ENCODE measurements at regions of chr7 and their contacts with region 1.

Region 1: DNA sequence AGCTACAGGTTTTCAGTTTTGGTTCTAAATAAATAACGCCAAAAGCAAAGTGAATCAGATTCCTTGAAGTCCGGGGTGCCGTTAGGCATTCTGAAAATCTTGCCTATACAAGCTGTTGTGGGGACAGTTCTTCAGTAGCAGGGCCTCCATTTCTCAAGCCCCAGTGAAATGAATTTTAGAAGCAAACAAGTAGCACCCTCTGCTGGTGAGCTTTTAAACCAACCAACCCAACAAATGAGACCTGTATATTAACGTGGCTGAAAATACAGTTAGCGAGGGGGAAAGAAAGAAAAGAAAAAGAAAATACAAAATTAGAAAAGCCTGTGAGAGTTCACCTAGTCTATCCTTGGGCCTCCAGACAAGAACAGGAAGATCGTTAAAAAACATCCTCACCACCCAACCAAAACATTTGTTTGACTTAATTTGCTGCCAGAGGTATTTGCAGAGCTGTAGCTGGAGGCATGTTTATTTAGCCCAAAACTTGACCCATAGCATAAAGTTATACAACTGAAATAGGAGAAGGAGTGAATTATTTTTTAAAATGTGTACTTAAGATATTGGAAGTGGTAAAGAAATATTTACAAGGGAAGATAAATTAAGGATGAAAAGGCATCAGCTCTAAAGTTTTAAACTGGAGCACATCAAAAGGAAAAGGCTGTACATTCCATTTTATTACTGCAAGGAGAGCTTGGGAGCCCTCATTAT is 98.9 kb downstream of the DYNC1I1 start:
- DNase-seq: peak in 1 of 2 experiments; percentile 52
- H3K4me3 ChIP-seq: no peak overlapping the region
- H3K27ac ChIP-seq: no peak overlapping the region
- H3K4me1 ChIP-seq: no peaks in the 10 kb centered on the region
- H3K27me3 ChIP-seq: no peaks in the 10 kb centered on the region; a peak in 1 of 7 replicates
- CTCF ChIP-seq: peak in 2 of 3 experiments; percentile 60 to 71; a peak in 3 of 4 replicates
- EP300 ChIP-seq: no peak
- POLR2A ChIP-seq: no peak
- RAD21 ChIP-seq: peak; percentile 86 to 92

Region 2: GRCh38 chr7:95723592-95724180 is 147.5 kb before region 1 on chr7:
- CTCF ChIA-PET with region 1: interaction called, 335 read pairs
- POLR2A ChIA-PET with region 1: interaction called, 3 read pairs
- DNase-seq: peak; percentile 25 to 52
- H3K4me3 ChIP-seq: no peak overlapping the region
- H3K27ac ChIP-seq: no peak overlapping the region
- H3K4me1 ChIP-seq: peaks cover 0 to 2% (median 0%) of the 10 kb centered on the region in 4 experiments; a peak in 1 of 7 replicates
- H3K27me3 ChIP-seq: no peaks in the 10 kb centered on the region; a peak in 1 of 7 replicates
- CTCF ChIP-seq: peak; percentile 23 to 80 (median 61)
- EP300 ChIP-seq: no peak
- POLR2A ChIP-seq: no peak
- RAD21 ChIP-seq: peak; percentile 92 to 94

Region 3: GRCh38 chr7:95730493-95731280 is 140.5 kb before region 1 on chr7:
- CTCF ChIA-PET with region 1: interaction called, 335 read pairs
- POLR2A ChIA-PET with region 1: interaction called, 3 read pairs
- DNase-seq: no peak
- H3K4me3 ChIP-seq: no peak overlapping the region
- H3K27ac ChIP-seq: no peak overlapping the region
- H3K4me1 ChIP-seq: no peaks in the 10 kb centered on the region
- H3K27me3 ChIP-seq: no peaks in the 10 kb centered on the region
- CTCF ChIP-seq: no peak
- EP300 ChIP-seq: no peak
- POLR2A ChIP-seq: no peak
- RAD21 ChIP-seq: no peak

Region 4: DNA sequence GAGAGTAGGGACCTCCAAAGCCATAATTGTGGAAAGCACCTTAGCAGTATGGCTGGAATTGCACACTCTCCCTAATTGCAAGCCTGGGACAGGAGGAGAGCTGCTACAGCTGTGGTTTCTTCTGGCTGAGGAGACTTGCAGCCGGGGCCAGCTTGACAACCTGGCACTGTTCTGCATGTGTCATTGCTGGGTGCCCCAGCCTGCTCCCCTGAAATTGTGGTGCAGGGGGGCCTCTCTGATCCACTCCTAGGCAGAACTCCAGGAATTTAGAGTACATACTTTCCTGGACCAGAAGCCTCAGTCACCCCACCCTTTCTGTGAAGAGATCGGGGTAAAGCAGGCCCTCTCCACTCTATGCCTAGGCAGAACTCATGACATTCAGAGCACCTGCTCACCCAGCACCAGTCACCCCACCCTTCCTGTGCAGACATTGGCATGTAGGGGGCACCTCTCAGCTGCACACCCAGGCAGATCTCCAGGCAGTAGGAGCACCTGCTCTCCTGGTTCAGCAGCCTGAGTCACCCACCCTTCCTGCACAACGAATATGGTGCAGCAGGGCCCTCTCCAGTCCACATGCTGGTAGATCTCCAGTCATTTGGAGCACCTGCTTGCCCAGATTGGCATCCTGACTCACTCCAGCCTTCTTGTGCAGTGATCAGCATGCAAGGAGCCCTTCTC is 133.3 kb before region 1 on chr7:
- CTCF ChIA-PET with region 1: interaction called, 17 read pairs
- POLR2A ChIA-PET with region 1: no interaction called
- DNase-seq: no peak
- H3K4me3 ChIP-seq: no peak overlapping the region
- H3K27ac ChIP-seq: no peak overlapping the region
- H3K4me1 ChIP-seq: no peaks in the 10 kb centered on the region
- H3K27me3 ChIP-seq: no peaks in the 10 kb centered on the region
- CTCF ChIP-seq: no peak
- EP300 ChIP-seq: no peak
- POLR2A ChIP-seq: no peak
- RAD21 ChIP-seq: no peak

Region 5: GRCh38 chr7:95772298-95772770 is 98.9 kb before region 1 on chr7 and contains the start of gene DYNC1I1:
- CTCF ChIA-PET with region 1: interaction called, 15 read pairs
- POLR2A ChIA-PET with region 1: no interaction called
- DNase-seq: no peak
- H3K4me3 ChIP-seq: peak within 1 kb of the TSS; percentile 38 to 69 (median 49)
- H3K27ac ChIP-seq: no peak within 1 kb of the TSS
- H3K4me1 ChIP-seq: peaks cover 0 to 9% (median 3%) of the 10 kb centered on the region in 4 experiments; a peak in 5 of 7 replicates
- H3K27me3 ChIP-seq: peaks cover 4 to 22% (median 18%) of the 10 kb centered on the region in 4 experiments
- CTCF ChIP-seq: no peak
- EP300 ChIP-seq: no peak
- POLR2A ChIP-seq: no peak
- RAD21 ChIP-seq: 0 out of 4 replicates have a peak, but pooled peaks of 1 of the 2 experiments have one; percentile 4
- total RNA-seq, gene DYNC1I1: 0.58 and 1.2 TPM in 2 replicates

Region 6: GRCh38 chr7:95859434-95859833 is 11.8 kb before region 1 on chr7:
- CTCF ChIA-PET with region 1: interaction called, 19 read pairs
- POLR2A ChIA-PET with region 1: no interaction called
- DNase-seq: no peak
- H3K4me3 ChIP-seq: no peak overlapping the region
- H3K27ac ChIP-seq: no peak overlapping the region
- H3K4me1 ChIP-seq: peaks cover 0 to 3% (median 3%) of the 10 kb centered on the region in 4 experiments; a peak in 1 of 7 replicates
- H3K27me3 ChIP-seq: peaks cover 0 to 1% (median 0%) of the 10 kb centered on the region in 4 experiments; a peak in 1 of 7 replicates
- CTCF ChIP-seq: no peak
- EP300 ChIP-seq: no peak
- POLR2A ChIP-seq: no peak
- RAD21 ChIP-seq: no peak